ENCODE measurements at regions of chrX and their contacts with region 1.

Region 1: GRCh38 chrX:19747652-19748610 is 139.5 kb downstream of the SH3KBP1 start:
- DNase-seq: peak; percentile 35 to 90 (median 84)
- ATAC-seq: peak; percentile 89
- H3K4me3 ChIP-seq: peak overlapping the region; percentile 13
- H3K4me3 Mint-ChIP-seq: peak overlapping the region; percentile 42 to 83 (median 71)
- H3K27ac ChIP-seq: peak overlapping the region; percentile 80
- H3K27ac Mint-ChIP-seq: peak overlapping the region; percentile 94 to 99 (median 98)
- H3K4me1 ChIP-seq: peaks cover 88 to 97% of the 10 kb centered on the region in 2 donors
- H3K4me1 Mint-ChIP-seq: peaks cover 33 to 99% (median 88%) of the 10 kb centered on the region in 7 donors
- H3K27me3 ChIP-seq: no peaks in the 10 kb centered on the region
- H3K27me3 Mint-ChIP-seq: no peaks in the 10 kb centered on the region

Region 2: GRCh38 chrX:19214311-19214710 is 533.6 kb before region 1 on chrX:
- CTCF ChIA-PET with region 1: no interaction called
- POLR2A ChIA-PET with region 1: no interaction called
- intact Hi-C with region 1: no loop called
- DNase-seq: no peak
- ATAC-seq: no peak
- H3K4me3 ChIP-seq: no peak overlapping the region
- H3K4me3 Mint-ChIP-seq: no peak overlapping the region
- H3K27ac ChIP-seq: no peak overlapping the region
- H3K27ac Mint-ChIP-seq: no peak overlapping the region
- H3K4me1 ChIP-seq: no peaks in the 10 kb centered on the region
- H3K4me1 Mint-ChIP-seq: no peaks in the 10 kb centered on the region
- H3K27me3 ChIP-seq: no peaks in the 10 kb centered on the region
- H3K27me3 Mint-ChIP-seq: peaks cover 0 to 12% (median 4%) of the 10 kb centered on the region in 5 donors

Region 3: DNA sequence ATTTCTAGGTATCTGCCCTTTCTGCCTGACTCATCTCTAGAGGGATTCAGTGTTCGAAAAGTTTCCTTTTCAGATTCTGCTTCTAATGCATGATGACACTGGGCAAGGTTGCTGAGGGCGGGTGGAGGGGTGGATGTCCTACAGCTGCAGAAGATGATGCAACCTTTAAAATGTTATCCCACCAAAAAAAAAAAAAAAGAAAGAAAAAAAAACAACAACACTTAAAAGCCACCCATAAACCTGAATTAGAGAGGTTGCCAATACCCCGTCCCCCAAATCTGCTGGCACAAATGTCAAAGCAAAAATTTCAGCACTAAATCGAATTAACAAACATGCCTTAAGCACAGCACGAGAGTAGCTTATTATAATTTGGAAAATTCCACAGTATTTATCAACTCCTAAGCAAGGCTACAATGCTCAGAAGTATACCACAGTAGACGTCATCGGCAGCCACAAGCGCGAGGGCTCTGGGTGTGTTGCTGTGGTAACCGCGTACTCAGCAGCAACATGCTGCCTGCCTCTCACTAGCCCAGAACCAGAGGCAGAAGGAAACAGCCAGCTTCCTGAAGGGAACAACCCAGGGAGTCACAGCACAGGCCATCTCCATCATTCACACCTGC is 65.1 kb before region 1 on chrX:
- CTCF ChIA-PET with region 1: no interaction called
- POLR2A ChIA-PET with region 1: no interaction called
- intact Hi-C with region 1: loop called (anchors 1 kb)
- DNase-seq: peak; percentile 24 to 88 (median 81)
- ATAC-seq: peak; percentile 97
- H3K4me3 ChIP-seq: no peak overlapping the region
- H3K4me3 Mint-ChIP-seq: peak overlapping the region in 9 of 10 donors; percentile 4 to 85 (median 67)
- H3K27ac ChIP-seq: peak overlapping the region; percentile 81
- H3K27ac Mint-ChIP-seq: peak overlapping the region; percentile 85 to 100 (median 98)
- H3K4me1 ChIP-seq: peaks cover 30 to 37% of the 10 kb centered on the region in 2 donors
- H3K4me1 Mint-ChIP-seq: peaks cover 43 to 88% (median 82%) of the 10 kb centered on the region in 7 donors
- H3K27me3 ChIP-seq: no peaks in the 10 kb centered on the region
- H3K27me3 Mint-ChIP-seq: no peaks in the 10 kb centered on the region

Region 4: DNA sequence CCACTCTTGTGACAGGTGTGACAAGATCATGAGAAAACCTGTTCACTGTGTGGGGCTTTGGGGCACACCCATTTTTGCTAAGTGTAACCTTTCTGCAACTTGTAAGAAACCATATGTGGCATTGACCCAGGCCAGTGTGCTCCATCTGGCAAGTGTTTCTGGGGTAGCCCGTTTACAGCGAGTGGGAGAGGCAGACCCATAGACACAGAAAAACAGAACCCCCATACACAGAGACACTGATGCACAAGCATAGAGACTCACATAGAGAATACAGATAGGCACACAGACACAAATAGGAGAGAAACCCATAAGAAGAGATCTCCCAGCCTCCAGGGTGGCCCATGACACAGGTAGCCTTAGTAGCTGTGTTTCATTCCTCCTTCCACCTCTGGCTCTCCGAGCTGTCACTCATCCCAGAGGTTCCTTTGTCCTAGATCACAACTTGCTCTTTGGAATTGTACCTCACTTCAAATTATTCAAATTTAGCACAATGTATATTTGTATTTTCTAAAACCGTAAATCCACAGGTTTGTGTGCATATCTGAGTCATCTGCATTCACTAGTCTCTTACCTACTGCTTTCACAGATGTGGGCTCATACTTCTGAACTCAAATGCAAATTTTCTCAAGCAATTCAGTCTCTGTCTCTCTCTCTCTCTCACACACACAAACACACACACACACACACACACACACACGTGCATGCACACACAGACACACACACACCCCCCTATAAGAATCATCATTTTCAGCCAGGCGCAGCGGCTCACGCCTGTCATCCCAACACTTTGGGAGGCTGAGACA is 25.1 kb after region 1 on chrX:
- CTCF ChIA-PET with region 1: interaction called, 7 read pairs
- POLR2A ChIA-PET with region 1: interaction called, 5 read pairs
- intact Hi-C with region 1: loop called (anchors 1 kb)
- DNase-seq: no peak
- ATAC-seq: peak; percentile 36
- H3K4me3 ChIP-seq: no peak overlapping the region
- H3K4me3 Mint-ChIP-seq: peak overlapping the region; percentile 58 to 76 (median 66)
- H3K27ac ChIP-seq: peak overlapping the region; percentile 55
- H3K27ac Mint-ChIP-seq: peak overlapping the region; percentile 78 to 95 (median 88)
- H3K4me1 ChIP-seq: peaks cover 56 to 59% of the 10 kb centered on the region in 2 donors
- H3K4me1 Mint-ChIP-seq: peaks cover 26 to 85% (median 68%) of the 10 kb centered on the region in 7 donors
- H3K27me3 ChIP-seq: no peaks in the 10 kb centered on the region
- H3K27me3 Mint-ChIP-seq: no peaks in the 10 kb centered on the region

Region 5: DNA sequence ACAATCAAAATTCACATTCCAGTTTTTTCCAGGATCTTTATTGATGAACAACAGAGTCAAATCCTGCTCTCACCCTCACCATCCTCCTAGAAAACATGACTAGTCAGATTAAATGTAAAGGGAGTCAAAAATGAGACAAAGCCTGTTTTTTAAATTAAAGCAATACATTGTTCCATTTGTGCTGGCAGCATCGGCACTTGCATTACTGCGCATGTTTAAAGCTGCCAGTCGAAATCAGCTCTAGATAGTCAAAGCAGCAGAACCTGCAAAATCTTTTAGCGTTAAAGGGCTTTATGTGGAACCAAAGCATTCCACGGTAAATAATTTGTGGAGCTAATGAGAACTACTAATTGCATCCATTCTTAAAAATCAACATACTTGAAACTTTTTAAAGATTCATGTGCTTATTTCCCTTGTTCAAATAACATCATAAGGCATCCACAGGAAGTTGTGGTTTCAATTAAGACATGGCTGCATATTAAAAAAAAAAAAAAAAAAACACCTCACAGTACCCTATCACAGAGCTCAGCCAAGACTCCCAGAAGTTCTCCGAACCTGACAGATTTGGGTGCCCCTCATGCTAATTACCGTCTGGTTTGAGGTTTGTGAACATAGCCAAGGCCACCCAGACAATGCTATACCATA is 57.2 kb after region 1 on chrX:
- CTCF ChIA-PET with region 1: interaction called, 5 read pairs
- POLR2A ChIA-PET with region 1: interaction called, 44 read pairs
- intact Hi-C with region 1: loop called in 1 of 2 experiments (anchors 1 kb)
- DNase-seq: peak in 7 of 9 donors; percentile 29 to 66 (median 46)
- ATAC-seq: peak; percentile 75
- H3K4me3 ChIP-seq: peak overlapping the region; percentile 57
- H3K4me3 Mint-ChIP-seq: peak overlapping the region; percentile 56 to 78 (median 75)
- H3K27ac ChIP-seq: peak overlapping the region; percentile 61
- H3K27ac Mint-ChIP-seq: peak overlapping the region; percentile 81 to 95 (median 89)
- H3K4me1 ChIP-seq: peaks cover 42 to 46% of the 10 kb centered on the region in 2 donors
- H3K4me1 Mint-ChIP-seq: peaks cover 0 to 66% (median 54%) of the 10 kb centered on the region in 7 donors
- H3K27me3 ChIP-seq: no peaks in the 10 kb centered on the region
- H3K27me3 Mint-ChIP-seq: no peaks in the 10 kb centered on the region

Region 6: GRCh38 chrX:19855700-19856381 is 107.9 kb after region 1 on chrX:
- CTCF ChIA-PET with region 1: interaction called, 3 read pairs
- POLR2A ChIA-PET with region 1: no interaction called
- intact Hi-C with region 1: loop called in 1 of 2 experiments (anchors 1 kb)
- DNase-seq: no peak
- ATAC-seq: no peak
- H3K4me3 ChIP-seq: peak overlapping the region; percentile 13
- H3K4me3 Mint-ChIP-seq: peak overlapping the region in 9 of 10 donors; percentile 44 to 78 (median 74)
- H3K27ac ChIP-seq: peak overlapping the region; percentile 31
- H3K27ac Mint-ChIP-seq: peak overlapping the region; percentile 53 to 95 (median 85)
- H3K4me1 ChIP-seq: peaks cover 11 to 17% of the 10 kb centered on the region in 2 donors
- H3K4me1 Mint-ChIP-seq: peaks cover 24 to 45% (median 37%) of the 10 kb centered on the region in 7 donors
- H3K27me3 ChIP-seq: no peaks in the 10 kb centered on the region
- H3K27me3 Mint-ChIP-seq: no peaks in the 10 kb centered on the region

Region 7: DNA sequence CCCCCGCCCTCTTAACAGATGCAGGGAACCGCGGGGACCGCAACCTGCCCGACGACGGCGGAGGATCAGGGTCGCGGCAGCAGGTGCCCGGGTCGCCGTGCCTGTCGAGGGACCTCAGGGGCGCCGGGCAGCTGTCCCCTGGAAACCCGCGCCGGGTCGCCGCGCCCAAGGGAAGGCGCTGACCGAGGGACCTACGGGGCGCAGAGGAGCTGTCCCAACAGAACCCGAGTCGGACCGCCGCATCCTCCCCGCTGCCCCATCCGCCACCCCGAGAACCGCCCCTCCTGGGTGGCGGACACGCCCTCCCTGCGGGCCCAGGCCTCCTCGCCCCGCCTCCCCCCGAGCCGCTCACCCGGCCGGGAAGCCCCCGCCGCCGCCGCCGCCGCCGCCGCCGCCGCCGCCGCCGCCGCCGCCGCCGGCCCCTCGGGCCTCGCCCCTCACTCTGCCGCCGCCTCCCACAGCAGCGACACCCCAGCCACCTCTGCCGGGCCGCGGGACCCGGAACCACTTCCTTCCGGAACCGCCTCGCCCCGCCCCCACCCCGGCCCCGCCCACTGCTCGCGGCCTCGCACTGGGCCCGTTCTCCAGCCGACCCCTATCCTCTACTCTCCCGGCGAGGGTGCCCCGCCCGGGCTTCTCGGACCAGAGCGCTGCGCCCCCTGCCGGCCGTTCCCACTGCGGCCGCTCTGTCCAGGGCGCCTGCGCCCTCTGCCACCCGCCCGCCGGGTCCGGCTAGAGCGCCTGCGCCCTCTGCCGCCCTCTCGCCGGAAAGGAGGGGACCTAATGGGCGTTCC is 242.8 kb after region 1 on chrX and contains the start of gene BCLAF3:
- CTCF ChIA-PET with region 1: no interaction called
- POLR2A ChIA-PET with region 1: no interaction called
- intact Hi-C with region 1: loop called (anchors 5 to 10 kb)
- DNase-seq: peak; percentile 64 to 91 (median 71)
- ATAC-seq: peak; percentile 94
- H3K4me3 ChIP-seq: peak within 1 kb of the TSS; percentile 51
- H3K4me3 Mint-ChIP-seq: peak within 1 kb of the TSS; percentile 82 to 96 (median 90)
- H3K27ac ChIP-seq: peak within 1 kb of the TSS; percentile 71
- H3K27ac Mint-ChIP-seq: peak within 1 kb of the TSS; percentile 79 to 98 (median 92)
- H3K4me1 ChIP-seq: no peaks in the 10 kb centered on the region
- H3K4me1 Mint-ChIP-seq: peaks cover 7 to 30% (median 19%) of the 10 kb centered on the region in 7 donors
- H3K27me3 ChIP-seq: no peaks in the 10 kb centered on the region
- H3K27me3 Mint-ChIP-seq: no peaks in the 10 kb centered on the region
- total RNA-seq, gene BCLAF3: 6.2 to 14.1 (median 11.7) TPM

Measured in naive thymus-derived CD4-positive, alpha-beta T cell (primary cell).